ENCODE measurements at regions of chrX and their contacts with region 1.

Region 1: DNA sequence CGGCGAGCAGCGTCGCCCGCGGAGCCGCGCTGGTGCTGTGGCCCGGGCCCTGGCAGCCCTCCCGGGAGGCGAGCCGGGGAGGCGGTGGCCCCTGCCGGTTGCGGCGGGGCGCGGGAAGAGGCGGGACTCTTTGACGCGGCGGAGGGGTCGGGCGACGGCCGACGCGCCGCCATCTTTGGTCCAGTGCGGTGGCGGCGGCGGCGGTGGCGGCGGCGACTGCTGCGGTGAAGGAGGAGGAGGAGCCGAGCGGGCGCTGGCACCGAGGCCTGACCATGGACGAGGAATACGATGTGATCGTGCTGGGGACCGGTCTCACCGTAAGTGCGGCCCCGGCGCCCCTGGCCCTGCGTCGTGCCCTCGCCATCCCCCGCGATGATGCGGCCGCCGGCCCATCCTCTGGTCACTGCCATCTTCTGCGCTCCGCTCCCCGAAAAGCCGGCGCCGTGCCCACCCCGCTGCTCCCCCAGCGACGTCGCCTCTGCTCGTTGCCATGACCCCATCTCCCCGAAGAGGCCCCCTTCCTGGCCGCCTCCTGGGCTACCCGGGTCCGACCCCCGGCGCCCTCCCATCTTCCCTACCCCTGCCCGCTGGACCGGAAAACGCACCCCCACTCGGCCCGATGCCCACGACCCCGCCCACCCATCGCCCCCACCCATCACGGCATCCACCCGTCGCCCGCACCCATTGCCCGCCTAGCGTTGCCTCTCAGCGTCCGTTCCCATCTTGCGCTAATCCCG is at the start of gene GDI1:
- DNase-seq: peak; percentile 30 to 81 (median 50)
- ATAC-seq: peak; percentile 54
- H3K4me3 ChIP-seq: peak within 1 kb of the TSS; percentile 59
- H3K4me3 Mint-ChIP-seq: peak within 1 kb of the TSS; percentile 90
- H3K27ac ChIP-seq: peak within 1 kb of the TSS; percentile 64 to 72
- H3K27ac Mint-ChIP-seq: peak within 1 kb of the TSS; percentile 93
- H3K4me1 ChIP-seq: peaks cover 45% of the 10 kb centered on the region
- H3K4me1 Mint-ChIP-seq: peaks cover 12% of the 10 kb centered on the region
- H3K27me3 ChIP-seq: no peaks in the 10 kb centered on the region
- H3K27me3 Mint-ChIP-seq: no peaks in the 10 kb centered on the region
- CTCF ChIP-seq: no peak
- total RNA-seq, gene GDI1: 144 to 145 TPM

Region 2: DNA sequence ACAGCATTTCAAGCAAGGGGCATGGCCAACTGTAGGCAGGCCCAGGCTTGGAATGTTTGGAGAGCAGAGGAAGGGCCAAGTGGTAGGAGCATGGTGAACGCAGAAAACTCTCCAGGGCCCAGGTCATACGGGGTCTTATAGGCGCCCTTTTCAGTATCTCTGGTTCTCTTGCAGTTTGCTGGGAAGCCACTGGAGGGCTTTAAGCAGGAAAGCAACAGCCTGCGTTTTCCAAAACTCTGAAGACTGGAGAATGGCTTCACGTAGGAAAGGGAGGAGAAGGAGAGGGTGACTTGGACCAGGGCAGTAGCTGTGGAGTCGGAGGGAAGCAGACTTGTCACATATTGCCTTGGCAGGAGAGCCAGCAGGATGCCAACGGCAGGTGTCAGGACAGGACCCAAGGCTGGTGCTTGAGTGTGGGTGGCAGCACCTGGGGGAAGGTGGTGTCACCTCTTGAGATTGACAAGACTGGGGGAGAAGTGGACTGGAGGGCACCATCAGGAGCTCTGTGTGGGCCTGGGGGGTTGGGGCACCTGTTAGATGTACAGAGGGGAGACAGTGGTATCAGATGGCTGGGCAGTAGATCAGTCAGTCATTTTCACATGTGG is 119.7 kb before region 1 on chrX:
- CTCF ChIA-PET with region 1: no interaction called
- POLR2A ChIA-PET with region 1: no interaction called
- intact Hi-C with region 1: no loop called
- DNase-seq: peak in 5 of 14 experiments; percentile 12 to 51 (median 27)
- ATAC-seq: peak; percentile 55
- H3K4me3 ChIP-seq: no peak overlapping the region
- H3K4me3 Mint-ChIP-seq: peak overlapping the region; percentile 37
- H3K27ac ChIP-seq: no peak overlapping the region
- H3K27ac Mint-ChIP-seq: no peak overlapping the region
- H3K4me1 ChIP-seq: peaks cover 38% of the 10 kb centered on the region
- H3K4me1 Mint-ChIP-seq: peaks cover 38% of the 10 kb centered on the region
- H3K27me3 ChIP-seq: no peaks in the 10 kb centered on the region
- H3K27me3 Mint-ChIP-seq: no peaks in the 10 kb centered on the region
- CTCF ChIP-seq: peak; percentile 22

Region 3: DNA sequence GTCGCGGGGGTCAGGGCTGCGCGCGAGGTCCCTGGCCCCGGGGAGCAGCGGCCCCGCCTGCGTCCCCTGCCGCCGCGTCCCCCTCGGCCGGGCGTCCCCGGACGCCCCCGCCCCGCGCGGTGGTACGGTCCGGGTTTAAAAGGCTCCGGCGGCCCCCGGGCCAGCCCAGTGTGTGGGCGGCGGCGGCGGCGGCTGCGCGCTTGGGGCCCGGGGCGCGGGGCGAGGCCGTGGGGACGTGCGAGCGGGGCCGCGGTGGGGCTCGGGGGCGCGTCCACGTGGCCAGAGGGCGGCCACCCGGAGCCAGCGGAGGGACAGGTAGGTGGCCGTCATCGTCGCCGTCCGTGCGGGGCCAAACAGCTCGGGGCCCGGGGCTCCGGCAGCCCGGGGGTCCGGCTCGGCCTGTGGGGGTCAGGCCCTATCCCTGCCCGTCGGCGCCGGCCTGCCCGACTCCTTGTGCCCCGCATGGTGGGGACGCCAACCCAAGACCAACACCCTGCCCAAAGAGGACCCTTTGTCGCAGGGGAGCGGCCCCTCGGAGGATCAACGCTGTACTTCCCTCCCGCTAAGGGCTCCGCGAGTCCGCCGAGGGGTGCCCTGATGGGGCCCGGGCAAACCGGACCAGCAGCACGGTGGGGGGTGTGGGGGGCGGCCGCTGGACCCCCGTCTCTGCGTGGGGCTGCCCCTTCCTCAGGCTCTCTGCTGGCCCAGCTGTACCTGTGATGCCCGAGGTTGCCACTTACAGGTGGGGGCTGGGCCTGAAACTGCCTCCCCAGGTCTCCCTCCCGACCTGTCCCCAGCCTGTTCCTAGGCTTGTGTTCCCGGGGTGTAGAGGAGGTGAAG is 21.2 kb after region 1 on chrX and contains the start of gene PLXNA3:
- CTCF ChIA-PET with region 1: no interaction called
- POLR2A ChIA-PET with region 1: interaction called, 8 read pairs
- intact Hi-C with region 1: loop called in 1 of 2 experiments (anchors 2 kb)
- DNase-seq: peak; percentile 41 to 84 (median 64)
- ATAC-seq: peak; percentile 79
- H3K4me3 ChIP-seq: peak within 1 kb of the TSS; percentile 67
- H3K4me3 Mint-ChIP-seq: peak within 1 kb of the TSS; percentile 92
- H3K27ac ChIP-seq: no peak within 1 kb of the TSS
- H3K27ac Mint-ChIP-seq: peak within 1 kb of the TSS; percentile 83
- H3K4me1 ChIP-seq: peaks cover 23% of the 10 kb centered on the region
- H3K4me1 Mint-ChIP-seq: peaks cover 11% of the 10 kb centered on the region
- H3K27me3 ChIP-seq: no peaks in the 10 kb centered on the region
- H3K27me3 Mint-ChIP-seq: no peaks in the 10 kb centered on the region
- CTCF ChIP-seq: no peak
- total RNA-seq, gene PLXNA3: 35.1 to 38.1 TPM

Region 4: DNA sequence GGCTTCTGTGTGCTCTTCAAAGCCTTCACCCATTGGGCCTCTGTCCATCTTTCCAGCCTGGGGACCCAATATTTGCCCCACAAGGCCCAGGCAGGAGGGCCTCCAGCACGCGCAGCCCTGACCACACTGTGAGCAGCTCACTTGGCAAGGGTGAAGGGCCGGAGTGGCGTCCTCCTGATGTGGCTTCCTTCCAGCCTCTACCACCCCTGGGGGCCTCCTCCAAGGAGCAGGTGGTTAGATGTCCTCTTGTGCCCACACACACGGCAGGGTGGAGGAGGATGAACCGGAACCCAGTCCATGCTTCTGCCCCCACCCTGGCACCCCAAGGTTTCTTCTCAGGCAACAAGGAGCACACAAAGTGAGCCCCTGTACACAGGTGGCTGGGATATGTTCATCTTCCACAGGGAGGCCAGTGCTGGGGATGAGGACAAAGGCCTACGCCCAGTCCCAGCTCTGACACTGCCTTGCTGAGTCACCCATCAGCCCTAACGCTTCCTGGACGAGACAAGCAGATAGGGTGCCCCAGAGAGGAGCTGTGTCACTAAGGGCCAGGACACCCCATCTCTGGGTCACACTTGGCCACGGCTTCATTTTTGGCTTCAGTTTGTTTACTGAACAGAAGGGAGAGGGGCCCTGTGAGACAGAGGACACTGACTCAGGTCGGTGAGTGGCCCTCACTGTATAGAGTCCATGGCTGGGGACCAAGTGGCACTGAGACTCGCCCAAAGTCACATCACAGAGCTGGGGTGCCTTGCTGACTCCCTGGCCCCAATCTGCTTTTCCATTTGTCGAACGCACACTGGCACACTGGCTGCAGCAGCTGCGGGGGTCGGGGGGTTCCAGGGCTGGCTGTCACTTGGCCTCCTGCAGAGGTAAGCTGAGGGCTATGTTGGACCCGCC is 47.4 kb after region 1 on chrX:
- CTCF ChIA-PET with region 1: no interaction called
- POLR2A ChIA-PET with region 1: interaction called, 4 read pairs
- intact Hi-C with region 1: loop called (anchors 2 to 10 kb)
- DNase-seq: peak in 2 of 14 experiments; percentile 18 to 46
- ATAC-seq: no peak
- H3K4me3 ChIP-seq: no peak overlapping the region
- H3K4me3 Mint-ChIP-seq: no peak overlapping the region
- H3K27ac ChIP-seq: no peak overlapping the region
- H3K27ac Mint-ChIP-seq: no peak overlapping the region
- H3K4me1 ChIP-seq: peaks cover 50% of the 10 kb centered on the region
- H3K4me1 Mint-ChIP-seq: peaks cover 8% of the 10 kb centered on the region
- H3K27me3 ChIP-seq: no peaks in the 10 kb centered on the region
- H3K27me3 Mint-ChIP-seq: no peaks in the 10 kb centered on the region
- CTCF ChIP-seq: no peak

Region 5: DNA sequence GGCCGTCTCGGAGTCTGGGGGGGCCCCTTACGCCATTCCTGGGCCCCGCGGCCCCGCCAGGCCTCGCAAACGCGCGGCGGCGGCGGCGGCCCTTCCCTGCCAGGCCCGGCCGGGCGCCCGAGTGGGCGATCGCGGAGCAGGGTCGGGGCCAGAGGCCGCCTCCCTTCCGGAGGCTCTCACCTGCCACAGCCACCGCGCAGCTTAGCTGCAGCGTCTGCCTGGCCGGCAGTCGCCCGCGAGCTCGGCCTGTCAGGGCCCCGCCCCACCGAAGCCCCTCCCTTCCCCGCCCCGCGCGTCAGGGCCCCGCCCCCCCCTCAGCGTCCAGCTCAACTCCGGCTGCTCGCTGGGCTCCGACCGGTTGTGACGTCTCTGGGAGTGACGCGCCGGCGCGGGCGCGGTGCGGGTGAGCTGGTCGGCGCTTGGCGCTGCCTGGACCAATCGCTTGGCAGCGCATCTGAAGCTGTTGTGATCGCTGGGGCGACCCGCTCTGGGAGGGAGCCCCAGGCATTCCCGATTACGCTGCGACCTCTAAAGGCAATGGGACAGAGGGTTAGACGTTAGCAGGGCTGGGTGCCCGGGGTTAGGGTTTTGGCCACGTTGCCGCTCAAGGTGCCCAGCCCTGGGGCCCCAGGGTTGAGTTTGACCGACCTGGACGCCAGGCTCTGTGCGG is 53.4 kb after region 1 on chrX and contains the start of gene SLC10A3:
- CTCF ChIA-PET with region 1: no interaction called
- POLR2A ChIA-PET with region 1: interaction called, 4 read pairs
- intact Hi-C with region 1: loop called (anchors 2 to 10 kb)
- DNase-seq: peak; percentile 68 to 95 (median 84)
- ATAC-seq: peak; percentile 78
- H3K4me3 ChIP-seq: peak within 1 kb of the TSS; percentile 72
- H3K4me3 Mint-ChIP-seq: peak within 1 kb of the TSS; percentile 91
- H3K27ac ChIP-seq: peak within 1 kb of the TSS; percentile 53 to 88
- H3K27ac Mint-ChIP-seq: peak within 1 kb of the TSS; percentile 95
- H3K4me1 ChIP-seq: peaks cover 38% of the 10 kb centered on the region
- H3K4me1 Mint-ChIP-seq: peaks cover 11% of the 10 kb centered on the region
- H3K27me3 ChIP-seq: no peaks in the 10 kb centered on the region
- H3K27me3 Mint-ChIP-seq: no peaks in the 10 kb centered on the region
- CTCF ChIP-seq: no peak
- total RNA-seq, gene SLC10A3: 15.7 to 16.4 TPM